Heart left ventricle (tissue), 16 donors: ENCODE measurements at regions of chr15 and their contacts with region 1.

Region 1: GRCh38 chr15:77966540-77967290 is 110.8 kb downstream of the TBC1D2B start:
- DNase-seq: peak in 1 of 5 donors; percentile 55
- ATAC-seq: peak; percentile 63 to 85 (median 73)
- H3K4me3 ChIP-seq: no peak overlapping the region
- H3K27ac ChIP-seq: no peak overlapping the region
- H3K4me1 ChIP-seq: peaks cover 0 to 4% (median 0%) of the 10 kb centered on the region in 12 donors
- H3K27me3 ChIP-seq: no peaks in the 10 kb centered on the region
- CTCF ChIP-seq: peak; percentile 74 to 91 (median 86)
- POLR2A ChIP-seq: no peak

Region 2: DNA sequence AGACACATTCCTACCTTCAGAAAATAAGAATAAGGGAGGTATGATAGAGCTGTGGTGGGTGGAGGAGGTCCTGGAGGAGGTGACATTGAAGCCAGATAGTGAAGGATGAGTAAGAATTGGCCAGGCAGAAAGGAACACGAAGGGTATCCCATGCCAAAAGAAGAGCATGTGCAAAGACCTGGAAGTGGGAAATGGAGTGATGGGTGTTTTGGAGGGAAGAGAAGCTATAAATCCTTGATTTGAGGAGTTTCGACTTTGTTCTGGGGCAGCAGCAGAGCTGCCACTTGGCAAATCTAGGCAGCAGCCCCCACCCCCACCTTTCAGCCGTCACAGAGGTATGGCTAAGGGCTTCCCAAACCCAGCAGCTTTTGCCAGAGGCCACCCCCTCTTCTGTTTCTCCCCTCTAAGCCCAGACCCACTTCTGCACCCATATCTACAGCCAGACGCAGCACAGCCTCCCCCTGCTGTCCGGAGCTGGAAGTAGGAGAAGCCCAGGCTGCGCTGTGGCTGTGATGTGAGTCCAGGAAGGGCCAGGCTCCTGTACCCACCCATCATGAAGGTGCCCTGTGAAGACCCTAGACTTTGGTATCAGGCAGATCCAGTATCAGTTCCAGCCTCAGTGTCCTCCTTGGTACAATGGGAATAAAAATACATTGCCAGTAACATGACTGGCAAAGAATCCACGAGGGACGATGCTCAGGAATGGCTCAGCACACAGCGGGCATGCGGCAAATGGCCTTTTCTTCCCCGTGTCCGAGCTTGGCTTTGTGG is 145.3 kb before region 1 on chr15:
- intact Hi-C with region 1: no loop called
- DNase-seq: peak; percentile 44 to 75 (median 48)
- ATAC-seq: peak; percentile 37 to 88 (median 76)
- H3K4me3 ChIP-seq: no peak overlapping the region
- H3K27ac ChIP-seq: no peak overlapping the region
- H3K4me1 ChIP-seq: peaks cover 0 to 23% (median 0%) of the 10 kb centered on the region in 12 donors
- H3K27me3 ChIP-seq: peaks cover 26 to 59% (median 34%) of the 10 kb centered on the region in 9 donors
- CTCF ChIP-seq: peak; percentile 40 to 76 (median 62)
- POLR2A ChIP-seq: no peak

Region 3: GRCh38 chr15:78000091-78000926 is 33.6 kb after region 1 on chr15:
- intact Hi-C with region 1: loop called in 4 of 10 experiments (anchors 2 to 5 kb)
- DNase-seq: peak; percentile 61 to 86 (median 75)
- ATAC-seq: peak; percentile 65 to 79 (median 74)
- H3K4me3 ChIP-seq: no peak overlapping the region
- H3K27ac ChIP-seq: no peak overlapping the region
- H3K4me1 ChIP-seq: peaks cover 5 to 38% (median 20%) of the 10 kb centered on the region in 12 donors
- H3K27me3 ChIP-seq: no peaks in the 10 kb centered on the region
- CTCF ChIP-seq: peak in 10 of 12 donors; percentile 22 to 64 (median 50)
- POLR2A ChIP-seq: no peak

Region 4: DNA sequence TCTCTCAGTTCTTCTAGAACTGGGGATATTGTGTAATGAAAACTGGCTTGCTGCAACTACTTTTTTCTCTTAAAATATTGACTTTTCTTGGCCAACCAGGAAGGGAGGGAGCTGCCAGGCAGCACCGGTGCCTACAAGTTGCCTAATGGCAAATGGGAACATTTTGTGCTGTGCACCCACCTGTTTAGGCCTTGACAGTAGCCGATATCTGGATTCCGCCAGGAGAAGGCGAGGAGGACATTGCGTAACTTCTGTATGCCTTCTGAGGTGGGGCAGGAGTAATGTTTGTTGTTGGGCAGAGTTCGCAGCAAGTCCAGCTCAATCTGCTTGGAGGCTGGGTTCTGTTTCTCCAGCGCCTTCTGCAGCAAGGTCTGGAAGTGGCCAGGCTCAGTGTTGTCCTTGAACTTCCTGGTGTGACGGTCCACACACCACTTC is 45.9 kb after region 1 on chr15:
- intact Hi-C with region 1: loop called in 2 of 10 experiments (anchors 5 kb)
- DNase-seq: no peak
- ATAC-seq: no peak
- H3K4me3 ChIP-seq: no peak overlapping the region
- H3K27ac ChIP-seq: no peak overlapping the region
- H3K4me1 ChIP-seq: peaks cover 0 to 11% (median 8%) of the 10 kb centered on the region in 12 donors
- H3K27me3 ChIP-seq: no peaks in the 10 kb centered on the region
- CTCF ChIP-seq: no peak
- POLR2A ChIP-seq: no peak

Region 5: GRCh38 chr15:78049691-78050440 is 83.2 kb after region 1 on chr15:
- intact Hi-C with region 1: no loop called
- DNase-seq: peak in 1 of 5 donors; percentile 41
- ATAC-seq: peak in 3 of 4 donors; percentile 41 to 46 (median 41)
- H3K4me3 ChIP-seq: no peak overlapping the region
- H3K27ac ChIP-seq: peak overlapping the region in 10 of 12 donors; percentile 19 to 92 (median 59)
- H3K4me1 ChIP-seq: peaks cover 15 to 98% (median 62%) of the 10 kb centered on the region in 12 donors
- H3K27me3 ChIP-seq: no peaks in the 10 kb centered on the region
- CTCF ChIP-seq: no peak
- POLR2A ChIP-seq: no peak

Region 6: GRCh38 chr15:78195735-78196201 is 229.1 kb after region 1 on chr15:
- intact Hi-C with region 1: loop called in 2 of 10 experiments (anchors 5 to 10 kb)
- DNase-seq: peak in 2 of 5 donors; percentile 28 to 67
- ATAC-seq: peak; percentile 79 to 86 (median 80)
- H3K4me3 ChIP-seq: no peak overlapping the region
- H3K27ac ChIP-seq: no peak overlapping the region
- H3K4me1 ChIP-seq: no peaks in the 10 kb centered on the region
- H3K27me3 ChIP-seq: no peaks in the 10 kb centered on the region
- CTCF ChIP-seq: peak; percentile 51 to 74 (median 64)
- POLR2A ChIP-seq: no peak

Region 7: GRCh38 chr15:78234515-78235040 is 267.9 kb after region 1 on chr15 and contains the start of gene ACSBG1:
- intact Hi-C with region 1: loop called in 1 of 10 experiments (anchors 5 kb)
- DNase-seq: no peak
- ATAC-seq: no peak
- H3K4me3 ChIP-seq: no peak within 1 kb of the TSS
- H3K27ac ChIP-seq: no peak within 1 kb of the TSS
- H3K4me1 ChIP-seq: no peaks in the 10 kb centered on the region
- H3K27me3 ChIP-seq: no peaks in the 10 kb centered on the region
- CTCF ChIP-seq: no peak
- POLR2A ChIP-seq: no peak
- total RNA-seq, gene ACSBG1: 0.05 to 1.2 (median 0.06) TPM in 4 of 9 donors, not detected in the others

Region 8: GRCh38 chr15:78422571-78423340 is 456.0 kb after region 1 on chr15:
- intact Hi-C with region 1: loop called in 1 of 10 experiments (anchors 10 kb)
- DNase-seq: peak; percentile 39 to 67 (median 57)
- ATAC-seq: peak in 3 of 4 donors; percentile 53 to 75 (median 74)
- H3K4me3 ChIP-seq: no peak overlapping the region
- H3K27ac ChIP-seq: no peak overlapping the region
- H3K4me1 ChIP-seq: peaks cover 0 to 11% (median 0%) of the 10 kb centered on the region in 12 donors
- H3K27me3 ChIP-seq: no peaks in the 10 kb centered on the region
- CTCF ChIP-seq: peak; percentile 88 to 96 (median 93)
- POLR2A ChIP-seq: no peak